ENCODE measurements at regions of chr7 and their contacts with region 1.

Region 1: GRCh38 chr7:33757562-33758165 is 147.7 kb upstream of the BMPER start:
- DNase-seq: peak in 1 of 2 experiments; percentile 14
- H3K4me3 ChIP-seq: no peak overlapping the region
- H3K27ac ChIP-seq: no peak overlapping the region
- H3K4me1 ChIP-seq: no peaks in the 10 kb centered on the region
- H3K27me3 ChIP-seq: peaks cover 37% of the 10 kb centered on the region
- CTCF ChIP-seq: peak; percentile 89

Region 2: DNA sequence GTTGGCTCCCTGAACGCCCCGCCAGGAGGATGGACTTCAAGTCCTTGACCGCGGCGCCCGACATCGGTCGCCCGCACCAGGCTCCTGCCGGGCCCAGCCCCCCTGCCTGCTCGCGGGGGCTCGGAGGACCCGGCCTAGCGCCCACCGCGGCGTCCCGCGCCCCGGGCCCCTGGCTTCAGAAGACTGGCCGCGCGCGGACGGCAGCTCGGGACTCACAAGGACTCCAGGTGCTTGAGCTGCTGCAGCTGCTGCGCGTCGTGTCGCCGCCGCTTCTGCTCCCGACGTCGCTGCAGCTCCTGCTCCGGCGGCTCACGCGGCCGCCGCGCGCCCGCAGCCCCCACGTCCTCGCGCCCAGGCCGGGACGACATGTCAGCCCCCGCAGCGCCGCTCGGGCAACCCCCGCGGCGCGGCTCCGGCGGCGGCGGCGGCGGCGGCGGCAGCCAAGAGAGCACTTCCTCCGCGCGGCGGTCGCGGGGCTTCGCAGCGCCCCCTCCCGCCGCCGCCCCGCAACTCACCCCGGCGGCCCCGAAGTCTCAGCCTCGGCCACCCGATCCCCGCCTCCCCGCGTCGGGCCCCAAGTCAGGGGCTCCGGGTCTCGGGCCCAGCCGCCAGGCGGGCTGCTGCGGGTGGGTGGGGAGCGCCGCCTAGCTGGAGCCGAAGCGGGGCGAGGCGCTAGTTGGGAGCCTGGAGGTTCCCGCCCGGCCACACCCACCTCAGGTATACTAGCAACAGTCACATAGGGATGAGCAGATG is 648.5 kb before region 1 on chr7 and contains the start of gene RP9:
- CTCF ChIA-PET with region 1: no interaction called
- POLR2A ChIA-PET with region 1: no interaction called
- intact Hi-C with region 1: no loop called
- DNase-seq: peak in 1 of 2 experiments; percentile 80
- H3K4me3 ChIP-seq: peak within 1 kb of the TSS; percentile 69
- H3K27ac ChIP-seq: peak within 1 kb of the TSS; percentile 4
- H3K4me1 ChIP-seq: peaks cover 24% of the 10 kb centered on the region
- H3K27me3 ChIP-seq: 0 out of 2 replicates have a peak, but pooled peaks cover 10% of the 10 kb centered on the region
- CTCF ChIP-seq: peak; percentile 62; the same call in 1 of the 2 replicates
- total RNA-seq, gene RP9: 15.4 and 22.1 TPM in 2 replicates

Region 3: GRCh38 chr7:33334349-33334748 is 423.3 kb before region 1 on chr7:
- CTCF ChIA-PET with region 1: no interaction called
- POLR2A ChIA-PET with region 1: no interaction called
- intact Hi-C with region 1: loop called (anchors 10 kb)
- DNase-seq: no peak
- H3K4me3 ChIP-seq: no peak overlapping the region
- H3K27ac ChIP-seq: no peak overlapping the region
- H3K4me1 ChIP-seq: no peaks in the 10 kb centered on the region
- H3K27me3 ChIP-seq: no peaks in the 10 kb centered on the region
- CTCF ChIP-seq: peak; percentile 62

Region 4: GRCh38 chr7:33789871-33790630 is 32.4 kb after region 1 on chr7:
- CTCF ChIA-PET with region 1: no interaction called
- POLR2A ChIA-PET with region 1: no interaction called
- intact Hi-C with region 1: no loop called
- DNase-seq: no peak
- H3K4me3 ChIP-seq: no peak overlapping the region
- H3K27ac ChIP-seq: no peak overlapping the region
- H3K4me1 ChIP-seq: no peaks in the 10 kb centered on the region
- H3K27me3 ChIP-seq: peaks cover 43% of the 10 kb centered on the region
- CTCF ChIP-seq: no peak

Region 5: DNA sequence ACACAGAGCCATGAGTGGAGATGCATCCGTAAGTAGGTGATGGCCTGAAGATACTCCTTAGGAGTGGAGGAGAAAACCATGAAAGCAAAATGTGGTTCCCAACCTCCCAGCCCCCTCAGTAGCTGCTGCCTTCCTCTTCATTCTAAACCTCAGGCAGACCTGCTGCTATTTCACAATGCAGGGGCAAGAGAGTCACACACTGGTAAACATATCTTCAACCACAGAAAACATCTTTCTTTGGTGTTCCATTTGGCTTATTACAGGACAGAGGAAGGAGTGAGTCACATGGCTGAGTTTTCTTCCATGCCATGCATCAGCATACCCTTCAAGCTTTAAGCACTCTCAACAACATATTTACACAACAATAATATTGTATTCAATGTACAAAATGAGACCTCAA is 489.8 kb after region 1 on chr7:
- CTCF ChIA-PET with region 1: no interaction called
- POLR2A ChIA-PET with region 1: no interaction called
- intact Hi-C with region 1: no loop called
- DNase-seq: no peak
- H3K4me3 ChIP-seq: no peak overlapping the region
- H3K27ac ChIP-seq: no peak overlapping the region
- H3K4me1 ChIP-seq: no peaks in the 10 kb centered on the region
- H3K27me3 ChIP-seq: no peaks in the 10 kb centered on the region
- CTCF ChIP-seq: no peak